ENCODE measurements at regions of chr3 and their contacts with region 1.

Region 1: DNA sequence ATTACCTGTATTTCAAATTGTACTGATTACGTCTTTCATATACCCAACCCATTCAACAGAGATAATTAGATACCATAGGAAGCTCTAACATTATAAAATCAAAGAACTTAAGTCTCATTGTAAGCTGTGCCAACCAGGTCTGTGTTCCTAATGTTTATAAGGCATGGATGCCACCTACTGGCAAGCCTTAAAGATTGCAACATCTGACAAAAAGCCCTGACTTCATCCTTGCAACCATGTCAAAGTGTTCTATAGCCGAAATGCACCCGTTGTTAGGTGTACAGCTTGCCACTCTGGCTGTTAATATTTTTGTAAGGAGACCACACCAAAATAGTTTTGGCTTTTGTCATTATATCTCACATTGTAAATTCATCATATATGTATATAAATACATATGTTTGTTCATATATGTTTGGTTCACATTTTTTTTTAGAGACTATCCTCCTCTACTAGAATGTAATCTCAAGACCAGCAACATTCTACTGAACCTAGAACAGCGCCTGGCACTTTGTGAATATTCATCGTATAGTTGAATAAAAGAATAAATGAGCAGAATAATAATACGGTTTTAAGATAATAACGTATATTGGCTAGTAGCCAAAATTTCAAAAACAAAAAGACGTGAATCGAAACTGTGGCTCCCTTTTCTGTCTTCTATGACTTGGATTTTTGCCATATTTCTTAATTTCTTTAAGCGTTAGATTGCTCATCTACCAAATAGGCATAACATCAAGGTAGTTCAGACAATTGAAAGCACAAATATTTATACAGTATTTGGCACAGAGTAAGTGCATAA is 258.1 kb downstream of the TBL1XR1 start:
- DNase-seq: peak; percentile 65
- H3K4me3 ChIP-seq: no peak overlapping the region
- H3K27ac ChIP-seq: no peak overlapping the region
- H3K27me3 ChIP-seq: no peaks in the 10 kb centered on the region
- CTCF ChIP-seq: peak; percentile 81

Region 2: DNA sequence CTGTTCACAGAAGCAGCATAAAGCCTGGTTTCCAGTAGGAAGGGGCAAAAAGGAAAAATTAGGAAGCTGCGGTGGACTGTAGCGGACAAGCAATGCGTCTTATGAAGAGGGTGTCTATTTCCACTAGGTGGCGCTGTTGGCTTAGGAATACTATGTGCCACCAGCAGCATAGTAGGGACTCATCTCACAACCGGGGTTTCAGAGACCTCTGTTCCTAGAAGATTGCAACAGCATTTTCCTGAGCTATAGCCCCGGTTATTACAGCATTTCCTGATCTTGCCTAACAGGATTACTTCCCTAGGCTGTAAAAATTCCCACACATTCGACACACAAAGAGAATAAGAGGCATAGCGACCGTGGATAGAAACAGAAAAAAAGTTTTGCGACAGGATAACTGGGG is 424.9 kb before region 1 on chr3:
- CTCF ChIA-PET with region 1: interaction called, 12 read pairs
- POLR2A ChIA-PET with region 1: no interaction called
- DNase-seq: no peak
- H3K4me3 ChIP-seq: no peak overlapping the region
- H3K27ac ChIP-seq: no peak overlapping the region
- H3K27me3 ChIP-seq: no peaks in the 10 kb centered on the region
- CTCF ChIP-seq: peak; percentile 45

Region 3: DNA sequence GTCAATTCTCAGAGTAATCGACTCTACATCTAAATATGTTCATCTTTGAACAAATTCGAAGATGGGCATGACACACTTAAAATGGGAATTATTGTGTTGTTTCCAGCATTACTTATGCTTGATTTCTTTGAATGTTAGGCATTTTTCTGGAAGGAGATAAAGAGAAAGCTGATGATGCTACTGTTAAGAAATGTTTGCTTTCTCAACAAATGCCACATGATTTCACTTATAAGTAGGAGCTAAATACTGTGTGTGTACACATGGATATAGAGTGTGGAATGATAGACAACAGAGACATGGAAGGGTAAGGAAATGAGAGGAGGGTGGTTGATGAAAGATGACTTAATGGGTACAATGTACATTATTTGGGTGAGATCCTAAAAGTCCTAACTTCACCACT is 142.8 kb before region 1 on chr3:
- CTCF ChIA-PET with region 1: no interaction called
- POLR2A ChIA-PET with region 1: no interaction called
- DNase-seq: no peak
- H3K4me3 ChIP-seq: no peak overlapping the region
- H3K27ac ChIP-seq: no peak overlapping the region
- H3K27me3 ChIP-seq: no peaks in the 10 kb centered on the region
- CTCF ChIP-seq: no peak

Region 4: GRCh38 chr3:176872771-176873209 is 66.4 kb before region 1 on chr3:
- CTCF ChIA-PET with region 1: interaction called, 89 read pairs
- POLR2A ChIA-PET with region 1: no interaction called
- DNase-seq: peak; percentile 11
- H3K4me3 ChIP-seq: no peak overlapping the region
- H3K27ac ChIP-seq: no peak overlapping the region
- H3K27me3 ChIP-seq: no peaks in the 10 kb centered on the region
- CTCF ChIP-seq: peak; percentile 85

Region 5: GRCh38 chr3:176927706-176928581 is 11.3 kb before region 1 on chr3:
- CTCF ChIA-PET with region 1: interaction called, 23 read pairs
- POLR2A ChIA-PET with region 1: no interaction called
- DNase-seq: no peak
- H3K4me3 ChIP-seq: no peak overlapping the region
- H3K27ac ChIP-seq: no peak overlapping the region
- H3K27me3 ChIP-seq: no peaks in the 10 kb centered on the region
- CTCF ChIP-seq: no peak